Right ventricle myocardium inferior (tissue), 1 donor: ENCODE measurements at regions of chr12 and their contacts with region 1.

Region 1: DNA sequence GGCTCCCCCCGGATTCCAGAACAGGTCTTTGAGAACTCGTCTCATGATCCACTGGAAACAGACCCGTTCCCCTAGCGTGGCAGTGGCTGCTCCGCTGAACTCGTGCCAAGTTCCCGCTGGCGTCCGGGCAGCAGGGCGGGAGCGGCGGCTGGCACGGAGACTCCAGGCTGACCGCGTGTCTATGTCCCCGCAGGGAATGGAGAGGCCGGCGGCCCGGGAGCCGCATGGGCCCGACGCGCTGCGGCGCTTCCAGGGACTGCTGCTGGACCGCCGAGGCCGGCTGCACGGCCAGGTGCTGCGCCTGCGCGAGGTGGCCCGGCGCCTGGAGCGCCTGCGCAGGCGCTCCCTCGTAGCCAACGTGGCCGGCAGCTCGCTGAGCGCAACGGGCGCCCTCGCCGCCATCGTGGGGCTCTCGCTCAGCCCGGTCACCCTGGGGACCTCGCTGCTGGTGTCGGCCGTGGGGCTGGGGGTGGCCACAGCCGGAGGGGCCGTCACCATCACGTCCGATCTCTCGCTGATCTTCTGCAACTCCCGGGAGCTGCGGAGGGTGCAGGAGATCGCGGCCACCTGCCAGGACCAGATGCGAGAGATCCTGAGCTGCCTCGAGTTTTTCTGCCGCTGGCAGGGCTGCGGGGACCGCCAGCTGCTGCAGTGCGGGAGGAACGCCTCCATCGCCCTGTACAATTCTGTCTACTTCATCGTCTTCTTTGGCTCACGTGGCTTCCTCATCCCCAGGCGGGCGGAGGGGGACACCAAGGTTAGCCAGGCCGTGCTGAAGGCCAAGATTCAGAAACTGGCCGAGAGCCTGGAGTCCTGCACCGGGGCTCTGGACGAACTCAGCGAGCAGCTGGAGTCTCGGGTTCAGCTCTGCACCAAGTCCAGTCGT is 1.5 kb downstream of the APOLD1 start:
- DNase-seq: peak; percentile 91
- ATAC-seq: peak; percentile 93

Region 2: DNA sequence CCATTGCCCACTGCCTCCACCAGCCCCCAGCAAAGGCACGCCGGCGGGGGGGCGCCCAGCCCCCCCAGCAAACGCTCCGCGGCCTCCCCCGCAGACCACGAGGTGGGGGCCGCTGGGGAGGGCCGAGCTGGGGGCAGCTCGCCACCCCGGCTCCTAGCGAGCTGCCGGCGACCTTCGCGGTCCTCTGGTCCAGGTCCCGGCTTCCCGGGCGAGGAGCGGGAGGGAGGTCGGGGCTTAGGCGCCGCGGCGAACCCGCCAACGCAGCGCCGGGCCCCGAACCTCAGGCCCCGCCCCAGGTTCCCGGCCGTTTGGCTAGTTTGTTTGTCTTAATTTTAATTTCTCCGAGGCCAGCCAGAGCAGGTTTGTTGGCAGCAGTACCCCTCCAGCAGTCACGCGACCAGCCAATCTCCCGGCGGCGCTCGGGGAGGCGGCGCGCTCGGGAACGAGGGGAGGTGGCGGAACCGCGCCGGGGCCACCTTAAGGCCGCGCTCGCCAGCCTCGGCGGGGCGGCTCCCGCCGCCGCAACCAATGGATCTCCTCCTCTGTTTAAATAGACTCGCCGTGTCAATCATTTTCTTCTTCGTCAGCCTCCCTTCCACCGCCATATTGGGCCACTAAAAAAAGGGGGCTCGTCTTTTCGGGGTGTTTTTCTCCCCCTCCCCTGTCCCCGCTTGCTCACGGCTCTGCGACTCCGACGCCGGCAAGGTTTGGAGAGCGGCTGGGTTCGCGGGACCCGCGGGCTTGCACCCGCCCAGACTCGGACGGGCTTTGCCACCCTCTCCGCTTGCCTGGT is 70.0 kb before region 1 on chr12 and contains the start of gene CDKN1B:
- intact Hi-C with region 1: loop called (anchors 2 kb)
- DNase-seq: peak; percentile 98
- ATAC-seq: peak; percentile 97
- total RNA-seq, gene CDKN1B: 38.0 TPM

Region 3: DNA sequence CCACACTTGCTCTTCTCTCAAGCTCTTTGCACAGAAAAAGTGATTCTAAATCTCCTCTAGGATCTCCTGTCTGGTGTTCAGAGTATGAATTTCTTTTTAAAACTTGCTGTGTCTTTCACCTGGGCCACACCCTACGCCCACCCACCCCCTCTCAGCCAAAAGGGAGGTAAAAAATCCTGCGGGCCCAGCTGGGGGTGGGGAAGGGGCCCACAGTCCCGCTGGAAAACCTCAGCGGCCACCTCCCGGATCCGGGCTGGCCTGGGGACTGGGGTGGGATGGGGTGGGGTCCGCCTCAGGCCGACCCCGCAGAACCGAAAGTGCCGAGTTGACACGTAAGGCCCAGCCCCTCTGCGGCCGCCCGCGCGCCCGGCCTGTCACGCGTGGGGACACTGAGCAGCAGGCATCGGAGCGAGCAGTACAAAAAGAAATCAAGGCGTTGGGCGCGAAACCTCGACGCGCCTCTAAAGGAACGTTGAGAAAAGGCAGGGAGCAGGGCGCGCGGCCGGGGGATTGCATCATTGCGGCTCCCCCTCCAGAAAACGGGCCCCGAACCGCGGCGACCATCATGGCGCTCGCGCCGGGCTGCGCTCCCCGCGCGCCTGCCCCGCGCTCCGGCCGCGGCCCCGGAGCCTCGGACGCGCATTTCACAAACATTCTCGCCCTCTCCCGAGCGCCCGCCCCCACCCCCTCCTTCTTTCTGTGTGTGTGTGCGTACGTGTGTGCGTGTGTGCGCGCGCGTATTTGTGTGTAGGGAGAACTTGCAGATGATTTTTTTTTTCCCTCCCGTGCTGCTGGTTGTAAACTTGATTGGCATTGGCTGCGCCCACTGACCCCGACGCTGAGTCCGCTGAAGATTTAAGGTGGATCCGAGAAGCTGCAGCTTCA is 62.1 kb before region 1 on chr12:
- intact Hi-C with region 1: loop called (anchors 2 kb)
- DNase-seq: peak; percentile 98
- ATAC-seq: peak; percentile 89

Region 4: GRCh38 chr12:12807970-12808702 is 21.2 kb after region 1 on chr12:
- intact Hi-C with region 1: loop called (anchors 1 kb)
- DNase-seq: peak; percentile 75
- ATAC-seq: peak; percentile 45

Region 5: GRCh38 chr12:12983420-12984035 is 196.6 kb after region 1 on chr12:
- intact Hi-C with region 1: loop called (anchors 5 kb)
- DNase-seq: no peak
- ATAC-seq: peak; percentile 73